ENCODE measurements at regions of chr7 and their contacts with region 1.

Region 1: DNA sequence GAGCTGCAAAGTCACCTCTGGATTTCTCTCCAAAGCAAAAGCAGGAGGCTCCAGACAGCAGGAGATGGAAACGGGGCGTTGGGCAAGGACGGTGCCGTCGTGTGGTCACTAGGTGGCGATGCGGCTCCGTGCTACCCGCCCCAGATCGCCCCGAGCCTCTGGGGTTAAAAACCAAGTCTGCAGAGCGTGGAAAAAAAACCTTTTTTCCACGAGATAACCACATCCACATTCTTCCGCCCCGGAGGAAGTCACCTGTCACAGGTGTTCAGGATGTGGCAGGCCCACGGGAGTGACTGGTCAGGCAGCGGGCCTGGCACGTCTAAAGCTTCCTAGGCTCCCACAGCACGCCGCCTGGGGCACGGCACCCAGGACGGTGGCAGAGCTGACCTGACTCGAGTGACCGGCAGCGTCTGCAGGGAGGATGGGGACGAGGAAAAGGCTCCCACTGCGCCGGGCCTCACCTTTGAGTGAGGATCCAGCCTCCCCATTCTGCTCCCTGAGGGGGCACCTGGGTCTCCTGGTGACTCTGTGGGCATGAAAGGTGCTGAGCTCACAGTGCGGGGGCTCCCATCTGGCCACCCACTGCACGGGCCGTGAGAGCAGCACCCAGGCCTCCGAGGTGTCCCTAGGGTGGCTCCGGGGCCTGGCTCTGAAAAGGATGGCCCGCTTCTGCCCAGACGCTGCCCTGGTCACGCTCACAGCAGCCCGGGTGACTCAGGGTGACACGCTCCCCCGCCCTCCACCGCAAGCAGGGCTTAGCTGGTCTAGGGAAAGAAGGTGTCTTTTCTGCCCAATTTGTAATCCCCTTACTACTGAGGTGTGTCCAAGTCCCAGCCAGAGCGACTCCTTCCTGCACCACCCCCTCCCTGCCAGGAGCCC is 71.3 kb upstream of the TNRC18 start:
- DNase-seq: peak; percentile 77 to 92 (median 90)
- ATAC-seq: peak; percentile 82 to 85
- H3K4me3 ChIP-seq: no peak overlapping the region
- H3K27ac ChIP-seq: no peak overlapping the region
- H3K4me1 ChIP-seq: peaks cover 4% of the 10 kb centered on the region
- H3K27me3 ChIP-seq: no peaks in the 10 kb centered on the region

Region 2: GRCh38 chr7:5428478-5429252 is 66.3 kb before region 1 on chr7:
- intact Hi-C with region 1: no loop called
- DNase-seq: peak; percentile 81 to 92 (median 87)
- ATAC-seq: peak; percentile 25 to 32
- H3K4me3 ChIP-seq: peak overlapping the region; percentile 93
- H3K27ac ChIP-seq: peak overlapping the region; percentile 94
- H3K4me1 ChIP-seq: peaks cover 7% of the 10 kb centered on the region
- H3K27me3 ChIP-seq: no peaks in the 10 kb centered on the region

Region 3: DNA sequence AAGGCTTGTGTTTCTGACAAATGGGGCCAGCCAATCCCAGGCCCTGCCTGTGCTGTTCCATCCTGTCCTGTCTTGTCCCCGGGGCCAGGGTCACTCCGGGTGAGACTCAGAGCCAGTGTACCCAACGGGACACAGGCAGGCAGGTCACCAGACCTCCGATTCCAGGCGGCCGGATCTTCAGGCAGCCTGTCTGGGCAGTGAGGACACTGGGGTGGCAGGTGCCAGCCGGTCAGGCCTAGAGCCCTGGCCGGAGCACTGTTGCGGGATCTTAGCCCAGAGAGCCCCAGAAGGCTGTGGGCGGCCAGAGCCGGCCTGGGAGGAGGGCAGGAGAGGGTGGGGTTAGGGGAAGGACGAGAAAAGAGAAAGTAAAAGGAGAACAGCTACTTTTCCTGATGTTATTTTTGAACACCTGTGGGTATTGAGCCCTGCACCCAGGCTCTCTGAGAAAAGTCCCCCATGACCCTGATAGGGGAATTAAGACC is 63.0 kb after region 1 on chr7:
- intact Hi-C with region 1: loop called in 2 of 4 experiments (anchors 2 kb)
- DNase-seq: peak; percentile 77 to 91 (median 88)
- ATAC-seq: peak; percentile 27 to 49
- H3K4me3 ChIP-seq: no peak overlapping the region
- H3K27ac ChIP-seq: peak overlapping the region; percentile 96
- H3K4me1 ChIP-seq: peaks cover 9% of the 10 kb centered on the region
- H3K27me3 ChIP-seq: no peaks in the 10 kb centered on the region

Region 4: DNA sequence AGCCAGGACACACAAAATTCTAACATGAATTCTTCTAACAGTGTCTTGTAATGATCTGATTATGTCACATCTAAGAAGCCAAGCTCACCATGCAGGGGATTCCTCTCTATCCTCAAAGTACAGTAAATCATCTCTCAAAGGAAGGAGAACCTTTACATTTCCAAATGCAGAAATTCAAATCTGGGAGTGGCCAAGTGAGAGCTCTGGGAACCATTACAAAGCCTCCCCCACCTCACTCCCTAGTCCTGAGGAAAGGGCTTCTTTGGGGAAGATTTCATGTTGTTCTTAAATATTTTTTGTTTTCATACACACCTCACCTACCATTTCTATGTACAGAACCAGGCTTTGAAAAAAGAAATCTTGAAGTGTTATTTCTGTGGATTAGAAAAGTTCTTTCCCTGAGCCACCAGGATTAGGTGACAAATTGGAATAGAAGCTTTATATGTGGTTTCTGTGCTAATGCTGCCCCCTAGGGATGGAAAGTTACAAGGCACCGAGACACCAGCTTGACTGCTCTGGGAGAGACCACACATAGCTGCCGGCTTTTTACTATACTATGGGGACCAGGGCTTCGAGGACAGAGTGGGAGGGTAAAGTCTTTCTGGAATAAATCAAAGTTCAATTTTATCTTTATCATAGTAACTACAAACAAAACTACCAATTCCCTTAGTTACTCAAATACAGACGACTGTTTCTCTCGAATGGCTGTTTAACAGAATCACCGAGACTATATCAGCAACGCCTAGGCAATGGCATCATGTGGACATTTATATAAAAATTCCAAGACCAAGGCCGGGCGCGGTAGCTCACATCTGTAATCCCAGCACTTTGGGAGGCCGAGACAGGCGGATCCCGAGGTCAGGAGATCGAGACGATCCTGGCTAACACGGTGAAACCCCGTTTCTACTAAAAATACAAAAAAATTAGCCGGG is 170.4 kb after region 1 on chr7:
- intact Hi-C with region 1: loop called in 3 of 4 experiments (anchors 5 to 10 kb)
- DNase-seq: peak in 2 of 3 donors; percentile 60 to 78
- ATAC-seq: peak; percentile 67 to 73
- H3K4me3 ChIP-seq: no peak overlapping the region
- H3K27ac ChIP-seq: no peak overlapping the region
- H3K4me1 ChIP-seq: peaks cover 10% of the 10 kb centered on the region
- H3K27me3 ChIP-seq: no peaks in the 10 kb centered on the region

Region 5: DNA sequence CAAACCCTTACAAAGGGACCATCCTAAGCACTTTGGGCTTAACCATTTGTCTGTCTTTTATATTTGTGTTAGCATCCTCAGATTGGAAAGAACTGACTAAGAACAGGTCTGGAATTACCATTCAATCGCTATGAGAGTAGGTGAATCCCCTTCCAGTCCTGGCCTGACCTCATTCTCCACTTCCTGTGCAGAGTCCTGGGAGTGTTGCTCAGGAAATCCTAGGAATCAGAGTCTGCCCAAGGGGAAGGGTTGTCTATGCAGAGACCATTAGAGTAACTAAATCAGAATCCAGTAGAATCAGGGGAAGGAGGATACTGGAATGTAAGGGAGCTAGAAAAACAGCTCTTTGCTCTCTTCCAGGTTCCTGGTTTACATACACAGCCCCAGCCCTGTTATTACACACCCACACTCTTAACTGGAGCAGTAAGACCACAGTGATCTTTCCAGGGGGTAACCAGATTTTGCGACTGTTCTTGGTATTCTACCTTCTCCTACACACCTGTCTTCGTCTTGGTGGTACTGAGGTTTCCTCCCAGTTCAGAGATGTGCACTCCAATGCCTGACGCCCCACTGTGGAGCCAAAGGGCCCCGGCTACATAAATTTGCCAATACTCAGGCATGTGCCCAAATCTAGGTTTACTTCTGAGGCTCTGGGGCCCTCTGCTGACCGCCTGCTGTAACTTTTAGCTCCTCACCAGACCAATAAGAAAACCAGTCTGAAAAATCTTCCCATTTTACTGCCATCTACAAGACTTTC is 182.8 kb after region 1 on chr7:
- intact Hi-C with region 1: loop called in 2 of 4 experiments (anchors 2 to 5 kb)
- DNase-seq: peak; percentile 69 to 88 (median 82)
- ATAC-seq: peak; percentile 75 to 80
- H3K4me3 ChIP-seq: no peak overlapping the region
- H3K27ac ChIP-seq: peak overlapping the region; percentile 57
- H3K4me1 ChIP-seq: peaks cover 12% of the 10 kb centered on the region
- H3K27me3 ChIP-seq: no peaks in the 10 kb centered on the region

Region 6: DNA sequence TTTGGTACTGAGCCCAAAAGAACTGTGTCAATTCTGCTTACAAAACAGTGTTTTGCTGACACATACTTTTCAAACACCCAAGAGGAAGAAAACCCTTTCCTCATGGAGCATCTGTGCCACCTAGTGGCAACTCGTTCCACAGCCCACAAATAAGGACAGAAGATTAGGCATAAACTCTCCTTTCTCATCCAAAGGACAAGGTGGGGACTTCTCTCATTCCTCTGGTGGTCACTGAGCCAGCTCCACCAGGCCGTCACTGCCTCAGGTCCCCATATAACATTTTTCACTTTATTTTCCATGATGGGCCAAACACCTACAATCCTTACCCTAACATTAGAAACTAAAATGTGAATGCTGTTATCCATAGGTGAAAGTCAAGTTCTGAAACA is 209.6 kb after region 1 on chr7:
- intact Hi-C with region 1: loop called (anchors 1 to 10 kb)
- DNase-seq: peak; percentile 68 to 90 (median 83)
- ATAC-seq: peak; percentile 76 to 78
- H3K4me3 ChIP-seq: no peak overlapping the region
- H3K27ac ChIP-seq: no peak overlapping the region
- H3K4me1 ChIP-seq: peaks cover 2% of the 10 kb centered on the region
- H3K27me3 ChIP-seq: no peaks in the 10 kb centered on the region

Region 7: GRCh38 chr7:6545398-6546126 is 1050.6 kb after region 1 on chr7:
- intact Hi-C with region 1: no loop called
- DNase-seq: peak in 1 of 3 donors; percentile 7
- ATAC-seq: no peak
- H3K4me3 ChIP-seq: no peak overlapping the region
- H3K27ac ChIP-seq: no peak overlapping the region
- H3K4me1 ChIP-seq: no peaks in the 10 kb centered on the region
- H3K27me3 ChIP-seq: no peaks in the 10 kb centered on the region

Measured in right cardiac atrium (tissue), 5 donors.